Common myeloid progenitor, CD34-positive (primary cell): ENCODE measurements at regions of chr3 and their contacts with region 1.

Region 1: GRCh38 chr3:134212906-134213665 is 37.6 kb downstream of the RYK start:
- DNase-seq: peak; percentile 76 to 85 (median 77)
- H3K4me3 ChIP-seq: no peak overlapping the region
- H3K27ac ChIP-seq: no peak overlapping the region
- H3K4me1 ChIP-seq: peaks cover 0 to 4% (median 2%) of the 10 kb centered on the region in 4 experiments
- H3K27me3 ChIP-seq: no peaks in the 10 kb centered on the region

Region 2: DNA sequence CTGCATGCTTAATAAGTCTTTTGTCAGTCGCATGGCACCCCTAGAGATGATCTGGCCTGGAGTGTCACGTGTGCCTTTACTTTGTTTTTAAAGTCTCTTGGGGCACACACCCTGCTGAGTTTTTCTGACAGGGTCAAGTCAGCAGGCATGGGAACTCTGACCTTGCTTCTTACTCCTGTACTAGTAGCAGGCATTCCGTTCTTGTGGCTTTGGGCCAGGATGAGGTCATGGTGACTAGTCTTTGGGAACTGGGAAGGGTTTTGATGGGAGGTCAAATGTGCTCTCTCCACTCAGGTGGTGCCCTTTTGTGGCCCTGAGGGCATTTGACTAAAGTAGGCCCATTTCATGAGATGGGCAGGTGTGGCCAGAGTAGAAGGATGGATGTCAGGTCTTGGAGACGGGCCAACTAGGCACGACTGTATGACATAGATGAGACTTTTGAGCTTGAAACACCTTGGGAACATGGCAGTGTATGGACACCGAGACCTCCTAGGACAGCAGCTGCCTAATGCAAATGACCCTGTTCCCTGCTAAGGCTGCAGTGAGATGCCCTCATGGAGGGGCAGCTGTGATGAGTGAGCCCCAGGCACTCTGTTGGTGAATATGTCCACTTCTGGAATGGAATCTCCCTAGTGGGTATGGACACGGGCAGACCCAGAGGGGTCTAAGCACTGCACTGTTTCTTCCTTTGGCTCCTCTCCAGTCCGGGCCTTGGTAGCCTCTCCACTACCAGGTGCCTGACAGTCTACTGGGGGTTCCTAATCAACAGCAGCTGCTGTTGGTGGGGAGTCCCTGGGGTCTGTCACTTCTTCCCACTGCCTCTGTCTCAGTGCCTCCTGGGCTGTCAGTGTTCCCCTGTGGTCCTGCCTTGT is 391.1 kb before region 1 on chr3:
- CTCF ChIA-PET with region 1: interaction called, 10 read pairs
- POLR2A ChIA-PET with region 1: no interaction called
- DNase-seq: no peak
- H3K4me3 ChIP-seq: no peak overlapping the region
- H3K27ac ChIP-seq: no peak overlapping the region
- H3K4me1 ChIP-seq: peaks cover 0 to 2% (median 0%) of the 10 kb centered on the region in 4 experiments
- H3K27me3 ChIP-seq: no peaks in the 10 kb centered on the region

Region 3: DNA sequence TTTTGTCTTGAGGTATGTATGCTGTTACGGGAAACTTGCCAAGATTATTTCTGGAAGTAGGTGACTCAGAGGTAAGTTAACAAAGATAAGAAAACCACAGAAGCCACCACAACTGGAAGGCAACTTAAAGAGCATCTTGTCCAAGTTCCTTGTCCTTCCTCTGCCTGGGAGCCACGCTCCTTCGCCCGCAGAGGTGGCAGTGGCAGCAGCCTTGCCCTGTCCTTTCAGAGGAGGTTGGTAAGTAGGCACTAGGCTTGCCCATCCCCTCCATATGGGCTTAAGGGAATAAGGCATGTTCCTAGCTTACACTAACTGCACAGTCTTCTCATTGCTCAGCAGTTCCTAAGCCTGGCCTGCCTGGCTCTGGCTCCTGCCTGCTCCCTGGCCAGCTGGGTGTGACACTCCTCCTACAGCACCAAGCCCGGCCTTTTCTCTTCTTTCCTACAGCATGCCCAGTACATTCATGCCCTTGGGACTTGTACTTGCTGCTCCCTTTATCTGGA is 269.4 kb before region 1 on chr3:
- CTCF ChIA-PET with region 1: interaction called, 140 read pairs
- POLR2A ChIA-PET with region 1: no interaction called
- DNase-seq: peak; percentile 94 to 98 (median 97)
- H3K4me3 ChIP-seq: no peak overlapping the region
- H3K27ac ChIP-seq: no peak overlapping the region
- H3K4me1 ChIP-seq: peaks cover 4 to 48% (median 44%) of the 10 kb centered on the region in 4 experiments
- H3K27me3 ChIP-seq: no peaks in the 10 kb centered on the region

Region 4: DNA sequence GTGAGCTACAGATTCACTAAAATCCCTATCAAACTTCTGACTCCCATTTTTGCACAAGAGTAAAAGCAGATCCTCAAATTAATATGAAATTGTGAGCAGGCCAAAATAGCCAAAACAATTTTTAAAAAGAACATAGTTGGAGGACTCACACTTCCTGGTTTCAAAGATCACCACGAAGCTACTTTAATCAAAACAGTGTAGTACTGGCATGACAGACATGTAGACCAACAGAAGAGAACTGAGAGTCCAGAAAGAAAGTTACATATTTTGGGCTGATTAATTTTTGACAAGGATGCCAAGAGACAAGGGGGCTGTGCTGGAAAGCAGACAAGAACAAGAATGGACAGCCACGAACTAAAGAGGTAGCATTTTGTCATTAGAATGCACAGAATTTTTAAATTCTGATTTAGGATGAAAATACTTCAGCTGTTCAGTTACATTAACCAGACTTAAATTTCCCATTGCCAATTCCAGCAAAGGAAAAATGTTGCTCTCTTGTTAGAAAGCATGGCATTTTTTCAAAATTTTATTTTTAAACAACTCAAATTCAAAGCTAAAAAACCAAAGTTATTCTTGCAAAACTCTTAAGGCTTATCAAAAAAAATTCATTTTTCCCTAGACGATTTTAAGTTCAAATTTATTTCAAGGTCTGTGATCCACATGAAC is 23.6 kb after region 1 on chr3:
- CTCF ChIA-PET with region 1: interaction called, 13 read pairs
- POLR2A ChIA-PET with region 1: no interaction called
- DNase-seq: no peak
- H3K4me3 ChIP-seq: no peak overlapping the region
- H3K27ac ChIP-seq: no peak overlapping the region
- H3K4me1 ChIP-seq: peaks cover 0 to 12% (median 4%) of the 10 kb centered on the region in 4 experiments
- H3K27me3 ChIP-seq: no peaks in the 10 kb centered on the region

Region 5: GRCh38 chr3:134255404-134255803 is 42.3 kb after region 1 on chr3:
- CTCF ChIA-PET with region 1: no interaction called
- POLR2A ChIA-PET with region 1: no interaction called
- DNase-seq: no peak
- H3K4me3 ChIP-seq: no peak overlapping the region
- H3K27ac ChIP-seq: no peak overlapping the region
- H3K4me1 ChIP-seq: peaks cover 3 to 26% (median 13%) of the 10 kb centered on the region in 4 experiments
- H3K27me3 ChIP-seq: no peaks in the 10 kb centered on the region

Region 6: DNA sequence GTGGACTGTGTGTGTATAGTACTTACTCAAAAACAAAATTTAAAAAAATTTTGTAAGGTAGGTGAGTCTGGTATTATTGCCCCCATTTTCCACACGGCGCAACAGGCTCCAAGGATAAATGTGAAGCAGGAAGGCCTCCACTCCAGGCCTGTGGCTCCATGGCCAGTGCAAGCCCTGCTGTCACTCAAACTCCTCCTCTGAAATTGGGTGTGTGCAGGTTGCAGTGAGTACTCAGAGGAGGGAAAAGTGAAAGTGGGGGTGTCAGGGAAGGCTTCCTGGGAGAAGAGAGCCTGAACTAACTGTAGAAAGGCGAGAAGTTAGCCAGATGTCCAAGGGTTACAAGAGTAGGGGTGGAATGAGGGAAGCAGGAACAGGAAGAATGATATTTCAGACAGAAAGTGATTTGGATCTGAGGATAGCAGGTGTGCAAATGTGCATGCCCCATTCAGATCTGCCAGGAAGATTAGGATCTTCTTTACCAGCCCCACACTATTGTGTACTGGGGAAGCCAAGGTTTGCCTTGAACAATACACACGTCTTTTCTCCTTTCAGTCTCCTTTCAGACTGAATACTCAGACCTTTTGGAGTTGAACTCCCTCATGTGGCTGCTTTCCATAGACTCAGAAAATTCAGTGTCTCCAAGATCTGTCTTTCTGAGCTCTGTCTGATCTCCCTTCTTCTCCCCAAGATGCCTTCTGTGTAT is 86.2 kb after region 1 on chr3:
- CTCF ChIA-PET with region 1: interaction called, 27 read pairs
- POLR2A ChIA-PET with region 1: no interaction called
- DNase-seq: peak in 2 of 3 donors; percentile 35 to 45
- H3K4me3 ChIP-seq: no peak overlapping the region
- H3K27ac ChIP-seq: no peak overlapping the region
- H3K4me1 ChIP-seq: peaks cover 0 to 8% (median 4%) of the 10 kb centered on the region in 4 experiments
- H3K27me3 ChIP-seq: peaks cover 4 to 19% (median 9%) of the 10 kb centered on the region in 5 experiments

Region 7: DNA sequence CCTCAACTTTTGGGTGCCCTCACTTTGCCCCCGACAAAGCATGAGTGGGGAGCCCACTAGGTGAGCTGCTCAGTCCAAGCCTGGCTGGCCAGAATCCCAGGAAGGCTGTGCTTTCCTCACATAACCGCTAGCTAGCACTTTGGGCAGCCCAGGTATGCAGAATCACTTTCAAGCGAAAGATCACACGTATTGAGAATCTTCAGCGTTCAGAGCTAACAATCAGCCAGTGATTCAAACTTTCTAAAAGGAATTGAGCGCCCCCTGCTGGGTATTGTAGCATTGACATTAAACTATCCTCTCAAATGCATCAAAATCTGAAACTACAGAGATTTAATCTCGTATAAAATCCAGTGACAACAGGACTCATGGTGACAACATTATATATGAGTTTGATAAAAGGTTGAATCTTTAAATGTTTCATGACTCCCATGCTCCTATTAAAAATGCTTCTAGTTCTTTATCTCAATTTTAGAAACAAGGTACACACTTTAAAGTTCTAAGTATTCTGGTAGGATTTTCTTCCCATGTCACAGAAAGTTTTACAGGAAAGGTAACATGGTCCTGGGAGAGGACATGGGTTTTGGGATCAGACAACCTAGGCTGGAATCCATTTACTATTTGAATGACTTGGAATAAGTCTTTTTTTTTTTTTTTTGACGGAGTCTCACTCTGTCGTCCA is 260.9 kb after region 1 on chr3:
- CTCF ChIA-PET with region 1: interaction called, 25 read pairs
- POLR2A ChIA-PET with region 1: no interaction called
- DNase-seq: peak; percentile 69 to 81 (median 74)
- H3K4me3 ChIP-seq: no peak overlapping the region
- H3K27ac ChIP-seq: no peak overlapping the region
- H3K4me1 ChIP-seq: no peaks in the 10 kb centered on the region
- H3K27me3 ChIP-seq: no peaks in the 10 kb centered on the region